ENCODE measurements at regions of chr17 and their contacts with region 1.

Region 1: GRCh38 chr17:34980681-34981537 is 597 bp downstream of the LIG3 start:
- DNase-seq: peak; percentile 83
- ATAC-seq: peak; percentile 93
- H3K4me3 ChIP-seq: peak overlapping the region; percentile 73 to 87 (median 86)
- H3K27ac ChIP-seq: peak overlapping the region; percentile 98
- H3K4me1 ChIP-seq: peaks cover 44% of the 10 kb centered on the region
- H3K27me3 ChIP-seq: no peaks in the 10 kb centered on the region
- CTCF ChIP-seq: peak; percentile 56
- EP300 ChIP-seq: no peak
- POLR2A ChIP-seq: peak; percentile 29 to 87
- RAD21 ChIP-seq: no peak; the same call in 1 of the 2 replicates

Region 2: GRCh38 chr17:34886831-34887230 is 94.1 kb before region 1 on chr17:
- CTCF ChIA-PET with region 1: no interaction called
- POLR2A ChIA-PET with region 1: no interaction called
- in situ Hi-C with region 1: no loop called
- intact Hi-C with region 1: no loop called
- DNase-seq: no peak
- ATAC-seq: no peak
- H3K4me3 ChIP-seq: no peak overlapping the region
- H3K27ac ChIP-seq: no peak overlapping the region
- H3K4me1 ChIP-seq: no peaks in the 10 kb centered on the region
- H3K27me3 ChIP-seq: peaks cover 0 to 14% of the 10 kb centered on the region in 2 experiments; a peak in 2 of 5 replicates
- CTCF ChIP-seq: no peak
- EP300 ChIP-seq: no peak
- POLR2A ChIP-seq: no peak
- RAD21 ChIP-seq: no peak

Region 3: GRCh38 chr17:34961093-34961911 is 19.6 kb before region 1 on chr17 and contains the starts of genes CCT6B and ZNF830:
- CTCF ChIA-PET with region 1: no interaction called
- POLR2A ChIA-PET with region 1: interaction called, 14 read pairs
- in situ Hi-C with region 1: no loop called
- intact Hi-C with region 1: loop called (anchors 2 kb)
- DNase-seq: peak; percentile 92
- ATAC-seq: peak; percentile 94
- H3K4me3 ChIP-seq: peak within 1 kb of the TSS; percentile 78 to 92 (median 86)
- H3K27ac ChIP-seq: peak within 1 kb of the TSS; percentile 85
- H3K4me1 ChIP-seq: peaks cover 22% of the 10 kb centered on the region
- H3K27me3 ChIP-seq: no peaks in the 10 kb centered on the region; a peak in 1 of 5 replicates
- CTCF ChIP-seq: 0 out of 2 replicates have a peak, but pooled peaks have one; percentile 14
- EP300 ChIP-seq: no peak
- POLR2A ChIP-seq: peak; percentile 89 to 94
- RAD21 ChIP-seq: no peak
- total RNA-seq, gene CCT6B: 1.1 and 1.4 TPM in 2 replicates
- total RNA-seq, gene ZNF830: 18.9 and 19.0 TPM in 2 replicates

Region 4: DNA sequence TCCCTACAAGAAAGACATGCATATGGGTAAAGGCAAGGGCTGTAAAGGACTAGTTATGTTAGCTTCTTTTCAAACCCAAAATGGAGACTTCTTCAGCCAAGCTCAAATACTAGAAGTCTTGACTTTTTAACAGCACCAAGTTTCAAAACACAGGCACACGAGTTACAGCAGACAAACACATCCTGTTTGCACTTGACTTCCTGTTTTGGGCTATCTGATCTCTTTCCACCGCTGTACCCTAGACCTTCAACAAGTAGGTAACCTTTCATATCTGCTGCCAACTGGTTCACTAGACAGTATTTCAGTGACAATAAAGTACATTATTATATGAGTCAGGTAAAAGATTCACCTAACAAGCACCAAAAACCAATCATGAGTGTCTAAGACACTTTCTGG is 70.3 kb after region 1 on chr17:
- CTCF ChIA-PET with region 1: no interaction called
- POLR2A ChIA-PET with region 1: interaction called, 10 read pairs
- in situ Hi-C with region 1: no loop called
- intact Hi-C with region 1: no loop called
- DNase-seq: peak; percentile 81
- ATAC-seq: peak; percentile 79
- H3K4me3 ChIP-seq: peak overlapping the region; percentile 19 to 54 (median 50); a peak in 5 of 6 replicates
- H3K27ac ChIP-seq: peak overlapping the region; percentile 93
- H3K4me1 ChIP-seq: peaks cover 93% of the 10 kb centered on the region
- H3K27me3 ChIP-seq: no peaks in the 10 kb centered on the region; a peak in 1 of 5 replicates
- CTCF ChIP-seq: no peak
- EP300 ChIP-seq: peak in 1 of 2 experiments; percentile 60; a peak in 2 of 4 replicates
- POLR2A ChIP-seq: no peak
- RAD21 ChIP-seq: no peak

Measured in HepG2 (cell line).